Psoas muscle (tissue), 8 donors: ENCODE measurements at regions of chrX and their contacts with region 1.

Region 1: GRCh38 chrX:138745196-138745595 is 33.7 kb upstream of the FGF13 start:
- DNase-seq: no peak
- ATAC-seq: peak in 3 of 4 donors; percentile 55 to 71 (median 61)
- H3K4me3 ChIP-seq: no peak overlapping the region
- H3K27ac ChIP-seq: no peak overlapping the region
- H3K4me1 ChIP-seq: no peaks in the 10 kb centered on the region
- H3K27me3 ChIP-seq: no peaks in the 10 kb centered on the region
- CTCF ChIP-seq: peak; percentile 84

Region 2: DNA sequence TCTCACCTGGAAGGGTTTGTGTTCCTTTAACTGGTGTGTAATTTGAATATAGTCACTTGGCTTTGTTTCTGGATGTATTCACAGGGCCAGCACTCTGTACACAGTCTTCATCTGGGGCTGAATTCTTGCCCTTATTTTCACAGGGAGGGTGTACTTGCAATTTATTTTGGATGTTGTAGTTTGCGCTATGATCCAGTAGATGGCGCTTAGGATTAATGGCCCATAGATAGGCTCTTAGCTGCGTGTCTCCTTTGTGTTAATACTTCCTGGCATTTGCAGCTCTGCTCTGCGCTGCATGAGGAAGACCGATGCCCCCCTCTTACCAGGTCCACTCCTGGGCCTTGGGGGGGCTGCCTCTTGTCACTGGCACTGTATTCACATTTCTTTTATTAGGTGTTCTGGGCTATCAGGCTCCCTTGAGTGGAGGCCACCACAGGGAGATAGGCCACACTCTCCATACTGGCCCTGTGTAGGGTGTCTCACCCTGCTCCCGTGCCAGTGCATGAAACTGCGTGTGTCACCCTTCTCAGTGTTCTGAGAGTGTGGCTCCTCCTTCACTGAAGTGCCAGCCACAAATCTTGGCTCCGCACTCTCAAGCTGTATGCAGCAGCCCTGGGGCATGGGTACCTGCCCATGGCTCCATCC is 617.0 kb before region 1 on chrX:
- intact Hi-C with region 1: loop called (anchors 5 to 10 kb)
- DNase-seq: no peak
- ATAC-seq: peak in 1 of 4 donors; percentile 50
- H3K4me3 ChIP-seq: no peak overlapping the region
- H3K27ac ChIP-seq: no peak overlapping the region
- H3K4me1 ChIP-seq: no peaks in the 10 kb centered on the region
- H3K27me3 ChIP-seq: no peaks in the 10 kb centered on the region
- CTCF ChIP-seq: peak; percentile 57

Region 3: DNA sequence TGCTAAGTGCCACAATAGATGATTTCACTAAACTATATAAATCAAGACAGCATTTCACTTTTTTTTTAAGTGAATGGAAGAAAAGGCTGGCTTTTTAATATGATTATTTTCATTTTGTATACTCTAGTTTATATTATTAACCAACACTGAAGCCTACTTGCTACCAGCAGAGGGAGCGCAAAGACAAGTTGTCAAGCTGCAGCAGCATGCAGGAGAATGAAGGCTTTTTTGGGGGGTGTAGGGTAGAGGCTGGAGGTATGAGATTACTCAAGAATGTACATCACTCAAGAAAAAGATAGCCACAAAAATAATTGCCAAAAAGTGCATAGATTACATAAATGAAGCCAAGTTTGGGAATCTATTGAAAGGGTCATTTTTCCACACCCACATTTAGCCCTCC is 553.2 kb before region 1 on chrX:
- intact Hi-C with region 1: loop called (anchors 5 to 10 kb)
- DNase-seq: no peak
- ATAC-seq: no peak
- H3K4me3 ChIP-seq: no peak overlapping the region
- H3K27ac ChIP-seq: no peak overlapping the region
- H3K4me1 ChIP-seq: no peaks in the 10 kb centered on the region
- H3K27me3 ChIP-seq: no peaks in the 10 kb centered on the region
- CTCF ChIP-seq: peak; percentile 26

Region 4: GRCh38 chrX:138708268-138708667 is 36.9 kb before region 1 on chrX:
- intact Hi-C with region 1: no loop called
- DNase-seq: no peak
- ATAC-seq: no peak
- H3K4me3 ChIP-seq: no peak overlapping the region
- H3K27ac ChIP-seq: no peak overlapping the region
- H3K4me1 ChIP-seq: no peaks in the 10 kb centered on the region
- H3K27me3 ChIP-seq: peaks cover 0 to 19% (median 0%) of the 10 kb centered on the region in 3 donors
- CTCF ChIP-seq: no peak